ENCODE measurements at regions of chr1 and their contacts with region 1.

Region 1: GRCh38 chr1:42035830-42036604 is 117.2 kb upstream of the GUCA2B start:
- DNase-seq: peak; percentile 92
- ATAC-seq: peak; percentile 87
- H3K4me3 ChIP-seq: peak overlapping the region; percentile 98
- H3K27ac ChIP-seq: no peak overlapping the region
- H3K4me1 ChIP-seq: peaks cover 20% of the 10 kb centered on the region
- H3K27me3 ChIP-seq: no peaks in the 10 kb centered on the region
- CTCF ChIP-seq: no peak

Region 2: DNA sequence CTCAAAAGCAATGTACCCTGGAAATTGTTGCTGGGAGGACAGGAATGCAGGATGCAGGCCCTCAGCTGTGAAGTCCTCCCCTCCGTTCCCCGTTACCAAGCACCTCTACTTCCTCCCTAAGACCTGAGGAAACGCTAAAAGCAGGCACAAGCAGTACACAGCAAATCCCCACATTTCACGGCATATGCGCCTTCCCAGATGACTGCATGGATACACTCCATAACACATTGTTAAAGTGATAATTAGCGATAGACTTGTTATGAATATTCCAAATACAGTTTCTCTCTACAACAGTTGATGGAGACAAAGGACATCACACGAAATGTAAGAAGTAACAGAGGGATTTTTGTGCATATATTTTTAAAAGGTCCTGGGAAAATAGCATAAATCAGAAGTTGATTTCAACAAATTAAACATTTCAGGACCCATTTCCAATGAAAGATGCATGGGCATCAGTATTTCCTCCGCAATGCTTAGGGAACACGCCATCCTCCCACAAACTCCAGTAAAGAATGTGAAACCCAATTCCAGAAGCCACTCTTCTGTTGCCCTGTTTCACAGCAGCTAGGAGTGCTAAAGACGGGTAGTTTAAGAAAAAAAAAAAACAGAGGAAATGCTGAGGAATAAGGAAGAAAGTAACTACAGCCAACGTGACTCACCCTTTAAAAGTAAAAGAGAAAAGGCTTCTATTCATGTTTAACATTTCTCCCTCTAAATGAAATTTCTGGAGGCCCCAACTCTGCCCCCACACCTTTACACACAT is 192.8 kb before region 1 on chr1:
- CTCF ChIA-PET with region 1: interaction called, 7 read pairs
- POLR2A ChIA-PET with region 1: no interaction called
- intact Hi-C with region 1: loop called (anchors 1 kb)
- DNase-seq: peak; percentile 68
- ATAC-seq: peak; percentile 19
- H3K4me3 ChIP-seq: no peak overlapping the region
- H3K27ac ChIP-seq: peak overlapping the region; percentile 67
- H3K4me1 ChIP-seq: peaks cover 71% of the 10 kb centered on the region
- H3K27me3 ChIP-seq: no peaks in the 10 kb centered on the region
- CTCF ChIP-seq: 0 out of 2 replicates have a peak, but pooled peaks have one; percentile 21

Region 3: DNA sequence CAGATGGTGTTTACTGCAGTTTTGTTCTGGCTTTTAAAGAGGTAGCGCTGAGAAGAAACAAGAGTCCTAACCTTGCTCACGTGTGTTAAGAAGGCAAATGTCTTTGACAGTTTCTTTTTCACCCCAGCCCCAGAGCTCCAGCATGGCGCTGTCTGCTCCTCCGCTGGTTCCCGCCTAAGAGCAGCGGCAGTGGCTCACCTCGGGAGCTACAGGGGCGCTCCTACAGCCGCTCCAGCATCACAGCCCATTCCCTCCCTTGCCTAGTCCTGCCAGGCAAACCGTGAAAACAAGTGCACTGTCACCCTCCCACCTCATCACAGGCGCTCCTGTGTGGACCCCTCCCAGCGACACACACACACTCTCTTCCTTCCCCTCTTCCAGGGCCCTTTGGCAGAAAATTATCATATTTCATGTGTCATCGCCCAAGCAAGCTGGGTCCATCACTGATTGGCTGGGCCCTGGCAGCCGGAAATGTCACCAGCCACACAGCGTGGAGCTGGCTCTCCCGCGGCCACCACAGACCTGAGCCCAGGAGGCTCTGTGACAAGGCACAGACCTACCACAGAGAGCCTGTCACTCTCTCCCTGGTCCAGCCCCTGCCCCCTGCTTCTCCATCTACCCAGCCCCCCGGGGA is 116.1 kb before region 1 on chr1:
- CTCF ChIA-PET with region 1: interaction called, 7 read pairs
- POLR2A ChIA-PET with region 1: no interaction called
- intact Hi-C with region 1: loop called (anchors 2 kb)
- DNase-seq: no peak
- ATAC-seq: no peak
- H3K4me3 ChIP-seq: peak overlapping the region; percentile 23; the same call in 1 of the 2 replicates
- H3K27ac ChIP-seq: peak overlapping the region; percentile 77
- H3K4me1 ChIP-seq: peaks cover 63% of the 10 kb centered on the region
- H3K27me3 ChIP-seq: no peaks in the 10 kb centered on the region
- CTCF ChIP-seq: no peak

Region 4: DNA sequence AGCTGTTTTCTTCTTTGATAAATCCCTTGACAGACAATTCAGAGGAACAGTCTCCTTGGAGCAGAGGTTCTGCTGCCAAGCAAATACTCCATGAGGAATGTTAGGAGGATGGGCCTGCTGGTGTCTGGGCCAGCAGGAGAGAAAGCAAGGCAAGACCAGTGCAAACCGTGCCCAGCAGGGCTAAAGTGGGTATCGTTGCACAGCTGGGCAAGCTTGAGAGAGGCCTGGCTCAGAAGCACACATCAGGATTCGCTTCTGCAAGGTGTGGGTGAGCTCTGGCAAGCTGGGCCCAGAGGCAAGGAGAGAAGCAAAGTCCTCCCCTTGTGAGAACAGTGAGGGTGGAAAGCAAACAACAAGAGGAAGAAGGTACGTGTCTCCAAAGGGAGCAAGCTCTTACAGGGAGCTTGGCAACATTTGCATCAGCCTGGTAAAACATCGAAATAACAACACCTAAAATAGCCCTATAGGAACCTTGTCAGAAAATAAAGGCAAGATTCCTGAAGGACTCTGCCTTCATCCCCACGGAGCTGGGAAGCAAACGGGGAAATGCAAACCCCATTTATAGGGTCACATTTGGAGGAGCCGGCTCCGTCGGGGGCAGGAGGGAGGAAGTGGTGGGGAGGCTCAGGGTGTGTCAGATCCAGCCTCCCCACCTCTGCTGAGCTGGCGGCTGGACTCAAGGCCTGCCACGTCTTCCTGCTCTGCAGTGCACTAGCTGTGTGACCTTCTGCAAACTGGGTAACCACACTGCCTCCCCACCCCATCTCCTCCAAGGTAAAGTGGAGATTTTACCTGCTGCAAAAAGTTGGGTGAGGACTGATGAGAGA is 55.0 kb before region 1 on chr1:
- CTCF ChIA-PET with region 1: no interaction called
- POLR2A ChIA-PET with region 1: interaction called, 10 read pairs
- intact Hi-C with region 1: loop called (anchors 5 kb)
- DNase-seq: peak; percentile 58
- ATAC-seq: peak; percentile 87
- H3K4me3 ChIP-seq: peak overlapping the region; percentile 15; the same call in 1 of the 2 replicates
- H3K27ac ChIP-seq: peak overlapping the region; percentile 71
- H3K4me1 ChIP-seq: peaks cover 38% of the 10 kb centered on the region
- H3K27me3 ChIP-seq: no peaks in the 10 kb centered on the region
- CTCF ChIP-seq: no peak

Region 5: DNA sequence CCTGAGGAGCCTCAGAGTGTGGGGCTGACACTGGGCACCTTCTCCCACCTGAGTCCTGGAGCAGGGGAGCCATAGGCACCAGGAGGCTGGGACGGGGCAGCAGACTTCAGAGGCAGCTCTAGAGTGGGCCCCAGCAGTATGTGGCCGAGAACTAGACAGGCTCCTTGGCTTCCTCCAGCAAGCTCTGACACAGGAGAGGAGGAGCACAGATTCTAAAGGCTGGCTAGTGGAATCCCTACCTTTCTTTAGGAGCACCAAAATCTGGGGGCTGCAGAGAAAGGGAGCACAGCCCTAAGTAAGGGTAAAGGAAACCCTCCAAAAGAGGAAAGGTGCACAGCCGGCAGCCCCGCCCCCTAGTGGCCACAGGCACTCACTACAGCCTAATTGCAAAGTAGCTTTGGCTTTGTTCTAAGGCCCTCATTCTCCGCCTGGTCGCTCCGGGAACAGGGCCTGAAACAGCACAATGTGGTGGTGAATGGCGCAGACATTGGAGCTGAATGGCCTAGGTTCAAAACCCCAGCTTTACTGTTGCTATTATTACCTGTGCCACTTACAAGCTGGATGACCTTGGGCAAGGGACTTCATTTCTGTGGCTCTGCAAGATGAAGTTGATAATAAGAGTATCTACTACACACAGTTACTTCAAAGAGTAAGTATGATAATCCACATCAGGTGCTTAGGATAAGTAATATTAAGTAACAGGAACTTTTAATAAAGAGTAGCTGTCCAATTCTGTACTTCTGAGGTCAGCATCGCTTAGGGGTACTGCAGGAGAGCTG is 137.3 kb after region 1 on chr1:
- CTCF ChIA-PET with region 1: no interaction called
- POLR2A ChIA-PET with region 1: no interaction called
- intact Hi-C with region 1: loop called (anchors 5 kb)
- DNase-seq: peak; percentile 56
- ATAC-seq: peak; percentile 31
- H3K4me3 ChIP-seq: no peak overlapping the region
- H3K27ac ChIP-seq: peak overlapping the region; percentile 88
- H3K4me1 ChIP-seq: peaks cover 64% of the 10 kb centered on the region
- H3K27me3 ChIP-seq: no peaks in the 10 kb centered on the region
- CTCF ChIP-seq: peak; percentile 98